Calu3 (cell line): ENCODE measurements at regions of chr9 and their contacts with region 1.

Region 1: DNA sequence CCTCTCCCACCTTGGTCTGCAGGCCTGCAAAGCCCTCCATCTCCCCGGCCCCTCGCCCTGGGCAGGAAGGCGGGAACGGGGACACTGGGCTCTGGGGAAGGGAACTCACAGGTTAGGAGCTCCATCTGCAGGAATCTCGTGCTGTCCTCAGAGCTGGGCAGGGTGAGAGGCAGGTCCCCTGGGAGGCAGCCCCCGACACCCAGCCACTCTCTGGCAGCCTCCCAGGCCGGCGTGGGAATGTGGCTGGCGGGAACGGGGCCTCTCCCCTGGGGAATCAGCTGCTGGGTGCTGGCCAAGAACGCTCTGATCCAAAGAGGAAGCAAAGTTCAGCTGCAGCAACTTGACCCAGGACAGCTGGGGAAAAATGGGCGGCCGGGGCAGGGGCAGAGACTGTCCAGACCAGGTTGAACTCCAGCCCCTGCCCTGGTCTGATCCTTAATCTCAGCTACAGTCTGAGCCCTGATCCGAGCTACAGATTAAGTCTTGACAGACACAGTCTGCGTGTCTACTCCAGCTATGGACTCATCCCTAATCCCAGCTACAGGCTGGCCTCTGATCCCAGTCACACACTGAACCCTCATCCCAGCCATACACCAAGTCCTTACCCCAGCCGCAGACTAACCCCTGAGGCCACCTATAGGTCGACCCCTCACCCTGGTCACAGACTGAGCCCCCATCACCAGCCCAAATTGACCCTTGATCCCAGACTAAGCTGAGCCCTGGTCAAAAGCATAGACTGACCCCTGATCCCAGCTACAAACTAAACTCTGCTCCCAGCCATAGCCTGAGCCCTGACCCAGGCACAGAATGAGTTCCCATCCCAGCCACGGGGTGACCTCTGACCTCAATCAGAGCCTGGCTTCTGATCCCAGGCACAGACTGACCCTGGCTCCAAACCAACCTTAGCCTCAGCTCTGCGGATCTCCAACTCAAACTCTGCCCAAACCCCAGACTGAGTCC is 37.3 kb upstream of the EGFL7 start:
- DNase-seq: peak; percentile 37
- H3K4me3 Mint-ChIP-seq: no peak overlapping the region
- H3K27ac Mint-ChIP-seq: no peak overlapping the region
- H3K4me1 Mint-ChIP-seq: no peaks in the 10 kb centered on the region
- H3K27me3 Mint-ChIP-seq: peaks cover 13% of the 10 kb centered on the region
- CTCF ChIP-seq: no peak

Region 2: DNA sequence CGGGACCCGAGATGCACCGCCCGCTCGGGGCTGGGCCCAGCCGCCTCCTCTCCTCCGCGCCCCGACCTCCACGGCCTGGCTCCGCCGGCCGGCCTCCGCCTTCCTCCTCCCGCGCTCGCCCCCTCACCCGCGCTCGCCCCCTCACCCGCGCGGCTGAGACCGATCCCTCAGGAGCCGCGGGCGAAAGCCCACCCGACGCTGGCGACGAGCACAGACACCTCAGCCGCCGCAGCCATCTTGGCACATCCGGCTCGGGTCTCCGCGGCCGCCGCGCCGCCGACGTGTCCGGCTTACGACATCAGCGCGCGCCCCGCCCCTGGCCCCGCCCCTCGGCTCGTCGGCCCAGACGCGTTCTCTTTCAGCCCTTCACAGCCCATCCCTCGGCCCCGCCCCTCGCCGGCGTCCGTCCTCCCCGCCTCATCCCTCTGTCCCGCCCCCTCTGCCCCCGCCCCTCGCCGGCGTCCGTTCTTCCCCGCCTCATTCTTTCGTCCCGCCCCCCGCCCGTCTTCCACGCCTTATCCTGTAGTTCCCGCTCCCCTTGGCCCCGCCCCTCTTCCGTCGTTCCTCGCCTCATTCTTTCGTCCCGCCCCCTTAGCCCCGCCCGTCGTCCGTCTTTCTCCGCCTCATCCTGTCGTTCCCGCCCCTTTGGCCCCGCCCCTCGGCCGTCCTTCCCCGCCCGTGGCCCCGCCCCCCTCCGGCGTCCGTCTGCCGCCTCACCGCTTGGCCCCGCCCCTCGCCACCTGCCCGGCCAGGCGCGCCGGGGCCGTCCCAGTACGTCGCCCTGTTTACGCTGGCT is 142.4 kb before region 1 on chr9 and contains the start of gene SEC16A:
- CTCF ChIA-PET with region 1: interaction called, 17 read pairs
- intact Hi-C with region 1: no loop called
- DNase-seq: peak; percentile 98
- H3K4me3 Mint-ChIP-seq: peak within 1 kb of the TSS; percentile 93
- H3K27ac Mint-ChIP-seq: peak within 1 kb of the TSS; percentile 97
- H3K4me1 Mint-ChIP-seq: no peaks in the 10 kb centered on the region
- H3K27me3 Mint-ChIP-seq: peaks cover 5% of the 10 kb centered on the region
- CTCF ChIP-seq: no peak
- total RNA-seq, gene SEC16A: 48.9 and 49.6 TPM in 2 replicates

Region 3: DNA sequence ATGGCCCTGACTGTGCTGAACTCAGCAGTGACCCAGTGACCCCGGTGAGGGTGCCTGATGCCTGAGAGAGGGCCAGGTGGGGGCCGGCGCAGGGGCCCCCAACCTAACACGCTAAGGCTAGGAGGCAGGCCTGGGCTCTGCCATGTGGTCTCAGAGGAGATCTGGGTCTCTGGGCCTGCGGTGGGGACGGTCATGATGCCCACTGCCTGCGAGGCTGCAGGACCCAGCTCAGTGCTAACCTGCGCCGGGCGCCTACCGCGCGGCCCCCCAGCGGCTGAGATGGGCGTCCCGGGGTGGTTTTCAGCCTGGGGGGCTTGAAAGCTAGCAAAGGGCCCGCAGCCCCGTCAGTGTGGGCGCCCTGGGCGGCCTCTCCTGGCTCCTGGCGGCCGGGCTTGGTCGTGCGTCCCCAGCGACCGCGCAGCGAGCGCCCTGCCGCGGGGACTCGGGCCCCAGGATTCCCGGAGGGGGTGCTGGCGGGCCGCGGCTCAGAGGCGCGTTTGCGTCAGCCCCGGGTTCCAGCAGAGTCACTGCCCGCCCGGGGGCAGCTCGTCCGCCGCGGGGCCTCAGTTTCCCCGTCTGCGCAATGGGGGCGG is 39.8 kb after region 1 on chr9:
- CTCF ChIA-PET with region 1: no interaction called
- intact Hi-C with region 1: no loop called
- DNase-seq: no peak
- H3K4me3 Mint-ChIP-seq: peak overlapping the region; percentile 41
- H3K27ac Mint-ChIP-seq: no peak overlapping the region
- H3K4me1 Mint-ChIP-seq: no peaks in the 10 kb centered on the region
- H3K27me3 Mint-ChIP-seq: peaks cover 25% of the 10 kb centered on the region
- CTCF ChIP-seq: peak; percentile 19

Region 4: GRCh38 chr9:136711751-136712689 is 86.6 kb after region 1 on chr9 and contains the start of gene DIPK1B:
- CTCF ChIA-PET with region 1: no interaction called
- intact Hi-C with region 1: no loop called
- DNase-seq: no peak
- H3K4me3 Mint-ChIP-seq: peak within 1 kb of the TSS; percentile 24
- H3K27ac Mint-ChIP-seq: no peak within 1 kb of the TSS
- H3K4me1 Mint-ChIP-seq: no peaks in the 10 kb centered on the region
- H3K27me3 Mint-ChIP-seq: peaks cover 12% of the 10 kb centered on the region
- CTCF ChIP-seq: no peak
- total RNA-seq, gene DIPK1B: 4.0 TPM in 2 replicates